Lower leg skin (tissue), 4 donors: ENCODE measurements at regions of chr10 and their contacts with region 1.

Region 1: DNA sequence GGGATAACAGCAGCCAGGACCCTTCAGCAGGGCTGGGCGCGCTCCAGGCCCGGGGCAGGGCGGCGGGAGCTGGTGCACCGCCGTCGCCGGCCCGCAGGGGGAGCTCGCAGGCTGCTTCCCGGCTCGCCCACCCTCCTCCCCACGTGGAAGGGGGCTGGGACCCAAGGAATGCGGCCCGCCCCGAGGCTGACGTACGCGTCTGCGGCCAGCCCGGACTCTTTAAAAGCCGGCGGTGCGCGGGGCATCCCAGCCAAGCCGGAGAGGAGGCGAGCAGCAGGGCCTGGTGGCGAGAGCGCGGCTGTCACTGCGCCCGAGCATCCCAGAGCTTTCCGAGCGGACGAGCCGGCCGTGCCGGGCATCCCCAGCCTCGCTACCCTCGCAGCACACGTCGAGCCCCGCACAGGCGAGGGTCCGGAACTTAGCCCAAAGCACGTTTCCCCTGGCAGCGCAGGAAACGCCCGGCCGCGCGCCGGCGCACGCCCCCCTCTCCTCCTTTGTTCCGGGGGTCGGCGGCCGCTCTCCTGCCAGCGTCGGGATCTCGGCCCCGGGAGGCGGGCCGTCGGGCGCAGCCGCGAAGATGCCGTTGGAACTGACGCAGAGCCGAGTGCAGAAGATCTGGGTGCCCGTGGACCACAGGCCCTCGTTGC is at the start of gene PFKFB3:
- DNase-seq: peak; percentile 92 to 99
- H3K4me3 ChIP-seq: peak within 1 kb of the TSS; percentile 58
- CTCF ChIP-seq: peak in 2 of 3 donors; percentile 85 to 89
- POLR2A ChIP-seq: peak in 1 of 2 donors; percentile 93
- total RNA-seq, gene PFKFB3: 56.4 to 77.4 (median 69.2) TPM

Region 2: DNA sequence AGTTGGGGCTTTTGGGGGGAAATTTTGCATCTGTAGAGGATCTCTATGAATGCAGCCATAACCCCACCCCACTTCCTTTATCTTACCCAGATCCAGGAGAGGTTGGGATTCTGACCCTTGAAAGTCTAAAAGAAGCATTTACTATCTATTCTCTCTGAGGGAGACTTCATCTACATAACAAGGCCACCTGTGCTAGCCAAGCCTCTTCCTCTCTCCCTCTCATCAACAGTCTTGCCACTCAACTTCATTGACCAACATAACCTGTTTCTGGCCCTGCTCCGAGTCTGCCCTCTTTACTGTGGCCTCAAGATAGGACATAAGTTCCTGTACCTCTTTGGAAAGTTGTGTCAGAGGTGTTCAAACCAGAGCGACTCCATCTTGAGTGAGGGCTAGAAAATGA is 817.6 kb before region 1 on chr10:
- intact Hi-C with region 1: no loop called
- DNase-seq: no peak
- H3K4me3 ChIP-seq: no peak overlapping the region
- CTCF ChIP-seq: no peak
- POLR2A ChIP-seq: no peak

Region 3: DNA sequence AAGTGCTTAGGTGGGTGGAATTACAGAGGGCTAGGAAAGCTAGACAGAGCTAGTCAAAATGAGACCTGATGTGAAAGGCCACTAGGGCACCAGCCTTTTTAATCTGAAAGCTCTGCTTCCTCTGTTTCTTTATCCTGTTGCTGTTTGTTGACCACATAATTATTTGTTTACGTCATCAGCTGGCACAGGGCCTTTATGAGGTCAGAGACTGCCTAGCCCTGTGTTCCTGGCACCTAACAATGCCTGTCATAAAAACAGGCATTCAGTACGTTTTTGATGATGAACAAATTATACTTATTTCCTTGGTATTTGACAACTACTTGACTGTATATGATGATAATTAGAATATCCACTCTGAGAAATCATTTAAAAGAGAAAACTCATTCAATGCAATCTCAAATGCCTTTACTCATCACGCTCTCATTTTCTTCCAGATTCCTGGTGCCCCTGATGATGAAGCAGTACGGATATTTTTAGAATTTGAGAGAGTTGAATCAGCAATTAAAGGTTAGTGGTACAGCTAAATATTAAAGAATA is 87.9 kb before region 1 on chr10:
- intact Hi-C with region 1: loop called (anchors 10 kb)
- DNase-seq: no peak
- H3K4me3 ChIP-seq: no peak overlapping the region
- CTCF ChIP-seq: no peak
- POLR2A ChIP-seq: no peak

Region 4: GRCh38 chr10:6144406-6145165 is 58.2 kb before region 1 on chr10:
- intact Hi-C with region 1: no loop called
- DNase-seq: peak; percentile 88 to 98
- H3K4me3 ChIP-seq: peak overlapping the region; percentile 79
- CTCF ChIP-seq: no peak
- POLR2A ChIP-seq: no peak

Region 5: GRCh38 chr10:6401562-6402348 is 198.9 kb after region 1 on chr10:
- intact Hi-C with region 1: loop called (anchors 5 kb)
- DNase-seq: peak in 1 of 2 donors; percentile 76
- H3K4me3 ChIP-seq: no peak overlapping the region
- CTCF ChIP-seq: peak in 1 of 3 donors; percentile 84
- POLR2A ChIP-seq: no peak